AG04450 (cell line): ENCODE measurements at regions of chr16 and their contacts with region 1.

Region 1: GRCh38 chr16:87636072-87636684 is 33.9 kb downstream of the JPH3 start:
- DNase-seq: peak; percentile 26
- H3K4me3 ChIP-seq: no peak overlapping the region
- H3K27ac ChIP-seq: no peak overlapping the region
- H3K27me3 ChIP-seq: peaks cover 45% of the 10 kb centered on the region
- CTCF ChIP-seq: peak; percentile 70

Region 2: GRCh38 chr16:87416826-87417527 is 219.2 kb before region 1 on chr16:
- CTCF ChIA-PET with region 1: interaction called, 72 read pairs
- POLR2A ChIA-PET with region 1: no interaction called
- DNase-seq: no peak
- H3K4me3 ChIP-seq: no peak overlapping the region
- H3K27ac ChIP-seq: no peak overlapping the region
- H3K27me3 ChIP-seq: no peaks in the 10 kb centered on the region
- CTCF ChIP-seq: peak; percentile 82

Region 3: DNA sequence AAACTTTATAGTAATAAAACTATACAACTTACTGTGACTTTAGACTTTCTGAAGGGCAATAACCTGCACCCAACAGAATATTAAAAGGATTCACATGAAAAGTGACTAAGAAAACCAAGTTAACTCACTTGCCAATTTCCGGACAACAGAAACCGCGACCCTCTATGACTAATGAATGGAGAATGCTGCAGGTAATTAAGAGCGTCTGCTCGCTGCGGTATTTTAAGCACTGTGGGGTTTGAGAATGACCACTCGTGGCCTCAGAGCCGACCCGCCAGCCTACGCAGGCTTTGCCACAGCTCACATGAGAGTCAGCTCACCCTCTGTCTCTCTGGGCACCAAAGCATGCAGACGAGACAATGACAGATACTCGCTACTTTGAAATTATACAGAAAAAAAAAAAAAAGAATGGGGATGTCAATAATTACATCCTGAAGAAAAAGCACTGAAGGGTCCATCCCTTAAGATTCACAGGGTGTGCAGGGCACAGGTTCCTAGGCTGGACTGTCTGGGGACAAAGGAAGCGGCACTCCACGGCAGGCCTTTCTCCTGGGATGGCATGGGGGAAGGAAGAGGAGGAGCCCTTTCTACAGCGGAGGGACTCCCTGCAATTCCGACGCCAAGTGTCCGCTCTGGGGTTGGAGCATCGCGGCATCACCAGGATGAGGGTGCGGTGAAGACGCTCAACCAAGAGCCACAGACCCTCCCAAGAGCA is 178.3 kb before region 1 on chr16:
- CTCF ChIA-PET with region 1: interaction called, 12 read pairs
- POLR2A ChIA-PET with region 1: no interaction called
- DNase-seq: peak; percentile 96
- H3K4me3 ChIP-seq: no peak overlapping the region
- H3K27ac ChIP-seq: peak overlapping the region; percentile 96
- H3K27me3 ChIP-seq: no peaks in the 10 kb centered on the region
- CTCF ChIP-seq: no peak

Region 4: GRCh38 chr16:87581833-87582203 is 54.4 kb before region 1 on chr16:
- CTCF ChIA-PET with region 1: interaction called, 75 read pairs
- POLR2A ChIA-PET with region 1: interaction called, 4 read pairs
- DNase-seq: peak; percentile 95
- H3K4me3 ChIP-seq: peak overlapping the region; percentile 32; the same call in 1 of the 2 replicates
- H3K27ac ChIP-seq: peak overlapping the region; percentile 99
- H3K27me3 ChIP-seq: no peaks in the 10 kb centered on the region
- CTCF ChIP-seq: no peak

Region 5: DNA sequence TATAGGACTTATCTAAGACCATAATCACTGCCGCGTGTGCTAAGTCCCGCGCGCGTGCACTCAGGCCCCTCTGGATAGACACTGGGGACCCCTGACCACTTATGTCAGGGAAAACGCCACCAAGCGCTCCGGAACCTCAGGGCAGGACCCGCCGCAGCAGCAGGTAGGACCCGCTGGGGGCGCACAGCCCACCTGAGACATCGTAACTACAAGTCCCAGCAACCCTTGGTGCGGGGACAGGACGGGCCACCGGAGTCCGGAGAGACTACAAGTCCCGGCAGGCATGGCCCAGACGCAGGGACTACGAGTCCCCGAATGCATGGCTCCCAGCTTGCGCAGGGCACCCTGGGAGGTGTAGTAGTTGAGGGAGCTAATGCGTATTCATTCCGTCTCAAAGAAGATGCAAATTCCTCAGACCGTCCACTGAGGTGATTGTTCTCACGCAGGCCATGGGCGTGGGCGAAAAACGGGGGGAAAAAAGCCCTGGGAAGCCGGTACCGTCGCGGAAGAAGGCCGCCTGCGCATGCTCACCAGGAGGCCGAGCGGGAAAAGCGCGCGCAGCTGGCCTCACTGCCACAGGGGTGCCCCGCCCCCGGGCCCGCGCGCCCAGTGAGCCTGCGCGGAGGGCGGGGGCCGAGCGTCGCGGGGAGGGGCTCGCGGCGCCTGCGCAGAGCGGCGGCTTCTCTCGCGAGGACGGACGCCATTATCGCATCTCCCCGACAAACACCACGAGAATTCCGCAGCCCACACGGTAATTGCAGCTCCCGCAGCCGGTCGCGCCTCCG is 314.8 kb after region 1 on chr16 and contains the start of gene BANP:
- CTCF ChIA-PET with region 1: no interaction called
- POLR2A ChIA-PET with region 1: no interaction called
- DNase-seq: peak; percentile 96
- H3K4me3 ChIP-seq: peak within 1 kb of the TSS; percentile 86
- H3K27ac ChIP-seq: peak within 1 kb of the TSS; percentile 90
- H3K27me3 ChIP-seq: no peaks in the 10 kb centered on the region
- CTCF ChIP-seq: peak; percentile 37
- polyA plus RNA-seq, gene BANP: 18.5 and 18.6 TPM in 2 replicates